MCF 10A (cell line): ENCODE measurements at regions of chr3 and their contacts with region 1.

Region 1: GRCh38 chr3:71710906-71711494 is 14.2 kb downstream of the EIF4E3 start:
- DNase-seq: peak; percentile 56
- H3K4me3 Mint-ChIP-seq: no peak overlapping the region
- H3K27ac Mint-ChIP-seq: no peak overlapping the region
- H3K4me1 Mint-ChIP-seq: no peaks in the 10 kb centered on the region
- H3K27me3 Mint-ChIP-seq: no peaks in the 10 kb centered on the region
- CTCF ChIP-seq: peak; percentile 48

Region 2: GRCh38 chr3:71690341-71690841 is 20.6 kb before region 1 on chr3:
- CTCF ChIA-PET with region 1: interaction called, 11 read pairs
- POLR2A ChIA-PET with region 1: interaction called, 3 read pairs
- intact Hi-C with region 1: no loop called
- DNase-seq: peak; percentile 81
- H3K4me3 Mint-ChIP-seq: peak overlapping the region; percentile 8
- H3K27ac Mint-ChIP-seq: peak overlapping the region; percentile 64
- H3K4me1 Mint-ChIP-seq: peaks cover 12% of the 10 kb centered on the region
- H3K27me3 Mint-ChIP-seq: no peaks in the 10 kb centered on the region
- CTCF ChIP-seq: no peak

Region 3: DNA sequence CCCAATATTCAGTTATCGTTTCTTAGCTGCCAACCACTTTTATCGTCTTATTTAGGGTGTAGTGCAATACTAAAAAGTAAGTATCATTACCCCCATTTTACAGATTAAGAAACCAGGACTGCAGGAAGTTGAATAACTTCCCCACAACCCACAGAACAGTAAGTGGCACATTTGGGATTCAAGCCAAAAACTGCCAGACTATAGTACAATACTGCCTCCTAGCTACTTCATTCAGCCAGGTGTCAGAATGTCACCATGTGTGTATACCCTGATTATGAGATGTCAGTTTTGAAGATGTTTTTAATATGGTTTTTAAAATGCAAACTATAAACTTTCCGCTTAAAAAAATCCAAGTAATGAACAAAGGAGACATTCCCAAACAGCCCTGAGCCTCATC is 148.1 kb after region 1 on chr3:
- CTCF ChIA-PET with region 1: interaction called, 9 read pairs
- POLR2A ChIA-PET with region 1: no interaction called
- intact Hi-C with region 1: loop called (anchors 5 kb)
- DNase-seq: peak; percentile 80
- H3K4me3 Mint-ChIP-seq: no peak overlapping the region
- H3K27ac Mint-ChIP-seq: no peak overlapping the region
- H3K4me1 Mint-ChIP-seq: no peaks in the 10 kb centered on the region
- H3K27me3 Mint-ChIP-seq: peaks cover 44% of the 10 kb centered on the region
- CTCF ChIP-seq: peak; percentile 35